ENCODE measurements at regions of chr6 and their contacts with region 1.

Region 1: GRCh38 chr6:138115877-138116660 is 8.8 kb upstream of the PERP start:
- DNase-seq: peak; percentile 79
- ATAC-seq: peak; percentile 83
- H3K4me3 ChIP-seq: no peak overlapping the region
- H3K4me3 Mint-ChIP-seq: no peak overlapping the region
- H3K27ac ChIP-seq: no peak overlapping the region
- H3K27ac Mint-ChIP-seq: no peak overlapping the region
- H3K4me1 ChIP-seq: peaks cover 0 to 6% of the 10 kb centered on the region in 2 donors
- H3K4me1 Mint-ChIP-seq: peaks cover 2% of the 10 kb centered on the region
- H3K27me3 ChIP-seq: peaks cover 0 to 11% (median 0%) of the 10 kb centered on the region in 4 experiments
- H3K27me3 Mint-ChIP-seq: peaks cover 38% of the 10 kb centered on the region
- CTCF ChIP-seq: peak; percentile 90

Region 2: DNA sequence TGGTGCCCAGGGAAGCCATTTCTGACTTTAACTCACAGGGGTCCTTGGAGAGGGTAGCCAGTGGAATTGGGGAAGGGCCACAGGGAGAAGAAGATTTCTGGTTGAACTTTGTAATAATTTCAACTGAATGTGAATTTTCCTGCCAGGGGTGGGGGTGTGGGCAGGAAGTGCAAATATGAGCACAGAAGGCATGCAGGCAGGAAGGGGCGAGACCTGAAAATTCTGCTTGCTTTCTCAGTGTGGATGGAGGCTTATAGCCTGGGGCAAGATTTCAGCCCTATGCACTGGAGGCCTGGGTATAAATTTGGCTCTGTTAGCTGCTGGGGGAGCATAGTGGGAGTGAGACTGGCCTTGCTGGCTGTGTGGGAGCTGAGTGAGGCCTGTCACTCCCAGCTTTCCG is 63.3 kb before region 1 on chr6:
- CTCF ChIA-PET with region 1: no interaction called
- POLR2A ChIA-PET with region 1: no interaction called
- intact Hi-C with region 1: no loop called
- DNase-seq: no peak
- ATAC-seq: no peak
- H3K4me3 ChIP-seq: no peak overlapping the region
- H3K4me3 Mint-ChIP-seq: no peak overlapping the region
- H3K27ac ChIP-seq: no peak overlapping the region
- H3K27ac Mint-ChIP-seq: no peak overlapping the region
- H3K4me1 ChIP-seq: no peaks in the 10 kb centered on the region
- H3K4me1 Mint-ChIP-seq: no peaks in the 10 kb centered on the region
- H3K27me3 ChIP-seq: peaks cover 0 to 3% (median 1%) of the 10 kb centered on the region in 4 experiments
- H3K27me3 Mint-ChIP-seq: peaks cover 61% of the 10 kb centered on the region
- CTCF ChIP-seq: no peak

Region 3: GRCh38 chr6:138157986-138158638 is 42.0 kb after region 1 on chr6:
- CTCF ChIA-PET with region 1: no interaction called
- POLR2A ChIA-PET with region 1: no interaction called
- intact Hi-C with region 1: no loop called
- DNase-seq: no peak
- ATAC-seq: no peak
- H3K4me3 ChIP-seq: no peak overlapping the region
- H3K4me3 Mint-ChIP-seq: no peak overlapping the region
- H3K27ac ChIP-seq: no peak overlapping the region
- H3K27ac Mint-ChIP-seq: no peak overlapping the region
- H3K4me1 ChIP-seq: peaks cover 14 to 19% of the 10 kb centered on the region in 2 donors
- H3K4me1 Mint-ChIP-seq: peaks cover 13% of the 10 kb centered on the region
- H3K27me3 ChIP-seq: peaks cover 2 to 31% (median 25%) of the 10 kb centered on the region in 4 experiments
- H3K27me3 Mint-ChIP-seq: peaks cover 46% of the 10 kb centered on the region
- CTCF ChIP-seq: no peak

Region 4: DNA sequence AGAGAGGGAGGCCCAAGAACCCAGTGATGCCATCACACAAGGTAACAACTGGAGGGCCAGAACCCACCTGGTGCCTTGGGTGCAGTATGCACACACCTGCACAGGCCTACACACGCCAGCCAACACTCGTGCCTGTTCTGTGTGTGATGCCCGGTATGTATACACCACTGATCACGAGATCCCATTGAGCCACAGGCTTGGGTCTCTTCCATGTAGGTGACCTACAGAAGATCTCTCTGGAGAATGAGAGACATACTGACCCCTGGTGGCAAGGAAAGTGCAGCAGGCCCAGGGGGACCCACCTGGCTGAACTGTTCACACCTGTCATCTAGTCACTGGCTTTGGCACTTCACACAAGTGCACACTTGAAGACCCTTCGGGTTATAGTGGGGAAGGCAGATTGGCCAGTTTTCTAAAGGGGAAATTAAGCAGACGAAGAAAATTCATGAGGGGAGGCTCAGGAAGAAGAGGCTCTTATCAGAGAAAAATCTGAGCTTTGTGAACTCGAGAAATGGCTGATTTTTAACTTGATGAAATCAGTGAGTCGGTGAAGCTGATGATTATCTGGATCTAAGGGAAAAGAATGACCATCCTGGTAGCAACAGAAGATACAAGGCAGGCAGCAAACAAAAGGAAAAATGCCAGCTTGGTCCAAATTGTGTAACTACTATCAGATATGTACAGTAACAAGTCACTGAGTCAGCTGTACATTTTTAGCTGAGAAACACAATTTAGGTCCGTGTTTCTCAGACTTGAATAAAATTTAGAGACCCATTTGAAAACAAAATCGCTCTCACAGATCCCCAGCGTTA is 171.3 kb after region 1 on chr6:
- CTCF ChIA-PET with region 1: interaction called, 27 read pairs
- POLR2A ChIA-PET with region 1: no interaction called
- intact Hi-C with region 1: loop called (anchors 1 kb)
- DNase-seq: peak; percentile 47
- ATAC-seq: no peak
- H3K4me3 ChIP-seq: no peak overlapping the region
- H3K4me3 Mint-ChIP-seq: no peak overlapping the region
- H3K27ac ChIP-seq: no peak overlapping the region
- H3K27ac Mint-ChIP-seq: no peak overlapping the region
- H3K4me1 ChIP-seq: no peaks in the 10 kb centered on the region
- H3K4me1 Mint-ChIP-seq: no peaks in the 10 kb centered on the region
- H3K27me3 ChIP-seq: no peaks in the 10 kb centered on the region
- H3K27me3 Mint-ChIP-seq: peaks cover 1% of the 10 kb centered on the region
- CTCF ChIP-seq: peak; percentile 62

Region 5: DNA sequence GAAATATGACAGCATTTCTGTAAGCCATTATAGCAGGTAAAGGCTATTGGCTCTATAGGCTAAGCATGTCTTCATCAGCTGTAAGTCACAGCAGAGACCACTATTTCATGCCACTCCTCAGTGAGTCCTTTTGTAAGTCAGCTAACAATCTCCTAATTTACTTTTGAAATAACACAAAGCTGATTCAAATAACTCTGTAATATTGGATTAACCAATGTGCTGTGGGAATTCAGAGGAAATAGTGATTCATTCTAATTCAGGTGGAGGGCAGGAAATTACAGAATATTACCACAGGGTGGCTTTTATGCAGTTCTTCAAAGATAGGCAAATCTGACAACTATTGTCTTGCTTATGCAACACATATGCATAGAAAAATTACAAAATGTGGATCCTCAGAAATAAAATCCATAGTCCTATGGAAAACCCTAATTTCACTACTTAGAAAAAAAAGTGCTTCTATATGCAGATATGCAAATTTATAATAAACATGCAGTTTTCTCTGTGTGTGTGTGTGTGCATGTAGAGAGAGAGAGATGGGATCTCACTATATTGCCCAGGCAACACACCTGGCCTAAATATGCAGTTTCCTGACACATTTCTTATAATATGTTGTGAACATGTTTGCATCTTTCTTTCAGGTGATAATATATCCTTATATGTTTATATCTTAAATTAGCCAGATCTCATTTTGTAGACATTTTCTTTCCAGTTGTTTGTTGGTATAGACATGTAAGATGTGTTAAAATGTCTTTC is 256.8 kb after region 1 on chr6:
- CTCF ChIA-PET with region 1: no interaction called
- POLR2A ChIA-PET with region 1: no interaction called
- intact Hi-C with region 1: no loop called
- DNase-seq: peak; percentile 24
- ATAC-seq: no peak
- H3K4me3 ChIP-seq: no peak overlapping the region
- H3K4me3 Mint-ChIP-seq: no peak overlapping the region
- H3K27ac ChIP-seq: no peak overlapping the region
- H3K27ac Mint-ChIP-seq: no peak overlapping the region
- H3K4me1 ChIP-seq: no peaks in the 10 kb centered on the region
- H3K4me1 Mint-ChIP-seq: no peaks in the 10 kb centered on the region
- H3K27me3 ChIP-seq: no peaks in the 10 kb centered on the region
- H3K27me3 Mint-ChIP-seq: peaks cover 12% of the 10 kb centered on the region
- CTCF ChIP-seq: no peak

Region 6: DNA sequence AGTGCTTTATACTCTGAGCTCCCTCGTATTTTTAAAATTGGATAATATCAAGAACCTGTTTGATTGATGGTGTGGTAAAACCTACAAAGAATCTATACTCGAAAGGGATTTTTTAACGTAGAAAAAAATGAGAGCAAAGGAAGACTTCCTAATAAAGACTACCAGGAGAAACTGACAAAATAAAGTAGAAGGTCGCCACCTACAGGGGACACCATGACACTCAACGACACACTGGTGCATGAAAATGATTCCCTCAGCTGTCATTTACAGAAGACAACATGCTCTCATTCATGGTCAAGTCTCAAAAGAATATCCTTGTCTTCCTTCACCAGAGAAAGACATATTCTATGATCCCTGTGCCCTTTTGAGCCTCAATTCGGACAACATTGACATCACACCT is 393.3 kb after region 1 on chr6:
- CTCF ChIA-PET with region 1: interaction called, 146 read pairs
- POLR2A ChIA-PET with region 1: no interaction called
- intact Hi-C with region 1: loop called (anchors 2 kb)
- DNase-seq: peak; percentile 47
- ATAC-seq: no peak
- H3K4me3 ChIP-seq: no peak overlapping the region
- H3K4me3 Mint-ChIP-seq: no peak overlapping the region
- H3K27ac ChIP-seq: no peak overlapping the region
- H3K27ac Mint-ChIP-seq: no peak overlapping the region
- H3K4me1 ChIP-seq: no peaks in the 10 kb centered on the region
- H3K4me1 Mint-ChIP-seq: no peaks in the 10 kb centered on the region
- H3K27me3 ChIP-seq: no peaks in the 10 kb centered on the region
- H3K27me3 Mint-ChIP-seq: peaks cover 18% of the 10 kb centered on the region
- CTCF ChIP-seq: peak; percentile 44

Region 7: GRCh38 chr6:138588805-138589434 is 472.9 kb after region 1 on chr6:
- CTCF ChIA-PET with region 1: interaction called, 17 read pairs
- POLR2A ChIA-PET with region 1: interaction called, 4 read pairs
- intact Hi-C with region 1: loop called (anchors 1 kb)
- DNase-seq: peak; percentile 76
- ATAC-seq: peak; percentile 68
- H3K4me3 ChIP-seq: no peak overlapping the region
- H3K4me3 Mint-ChIP-seq: no peak overlapping the region
- H3K27ac ChIP-seq: no peak overlapping the region
- H3K27ac Mint-ChIP-seq: no peak overlapping the region
- H3K4me1 ChIP-seq: peaks cover 12 to 13% of the 10 kb centered on the region in 2 donors
- H3K4me1 Mint-ChIP-seq: peaks cover 20% of the 10 kb centered on the region
- H3K27me3 ChIP-seq: no peaks in the 10 kb centered on the region
- H3K27me3 Mint-ChIP-seq: no peaks in the 10 kb centered on the region
- CTCF ChIP-seq: peak; percentile 92

Region 8: GRCh38 chr6:138765896-138766655 is 650.0 kb after region 1 on chr6:
- CTCF ChIA-PET with region 1: interaction called, 56 read pairs
- POLR2A ChIA-PET with region 1: no interaction called
- intact Hi-C with region 1: loop called (anchors 1 kb)
- DNase-seq: peak; percentile 57
- ATAC-seq: peak; percentile 47
- H3K4me3 ChIP-seq: no peak overlapping the region
- H3K4me3 Mint-ChIP-seq: no peak overlapping the region
- H3K27ac ChIP-seq: no peak overlapping the region
- H3K27ac Mint-ChIP-seq: no peak overlapping the region
- H3K4me1 ChIP-seq: peaks cover 9 to 13% of the 10 kb centered on the region in 2 donors
- H3K4me1 Mint-ChIP-seq: peaks cover 5% of the 10 kb centered on the region
- H3K27me3 ChIP-seq: no peaks in the 10 kb centered on the region
- H3K27me3 Mint-ChIP-seq: no peaks in the 10 kb centered on the region
- CTCF ChIP-seq: peak; percentile 84